WTC11 (cell line): ENCODE measurements at regions of chr3 and their contacts with region 1.

Region 1: DNA sequence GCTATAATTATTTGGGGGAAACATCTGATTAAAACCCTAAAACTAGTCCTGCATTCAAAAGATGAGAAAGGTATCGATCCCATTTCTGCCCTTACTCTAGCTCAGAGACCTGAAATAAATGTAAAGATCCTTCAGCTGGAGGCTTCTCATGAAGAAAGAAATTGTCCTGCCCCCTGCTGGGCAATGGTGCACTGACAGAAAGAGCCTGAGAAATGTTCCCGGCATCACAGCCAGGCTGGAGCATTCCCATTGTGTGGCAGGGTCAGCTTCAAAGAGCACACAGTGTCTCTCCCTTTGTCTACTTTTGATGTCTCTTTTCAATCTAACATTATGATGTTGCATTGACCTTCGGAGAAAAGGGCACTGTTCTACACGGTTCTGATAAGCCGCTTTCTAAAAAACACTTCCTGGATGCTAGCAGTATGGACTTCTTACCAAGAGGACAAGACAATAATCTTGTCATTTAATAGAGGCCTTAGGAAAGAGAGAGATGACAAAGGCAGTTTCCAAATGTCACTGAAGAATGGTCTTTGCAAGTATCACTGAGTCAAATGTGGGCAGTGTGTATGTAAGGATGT is 287.5 kb downstream of the MAGI1 start:
- DNase-seq: peak; percentile 77
- ATAC-seq: peak; percentile 80
- H3K4me3 Mint-ChIP-seq: no peak overlapping the region
- H3K27ac Mint-ChIP-seq: peak overlapping the region; percentile 51; the same call in 1 of the 2 replicates
- H3K4me1 Mint-ChIP-seq: peaks cover 41% of the 10 kb centered on the region
- H3K27me3 Mint-ChIP-seq: no peaks in the 10 kb centered on the region
- CTCF ChIP-seq: peak; percentile 62

Region 2: GRCh38 chr3:65439641-65440284 is 311.4 kb before region 1 on chr3:
- CTCF ChIA-PET with region 1: interaction called, 23 read pairs
- POLR2A ChIA-PET with region 1: no interaction called
- DNase-seq: peak; percentile 62
- ATAC-seq: peak; percentile 97
- H3K4me3 Mint-ChIP-seq: no peak overlapping the region
- H3K27ac Mint-ChIP-seq: peak overlapping the region; percentile 68
- H3K4me1 Mint-ChIP-seq: peaks cover 20% of the 10 kb centered on the region
- H3K27me3 Mint-ChIP-seq: no peaks in the 10 kb centered on the region
- CTCF ChIP-seq: peak; percentile 27; the same call in 1 of the 2 replicates

Region 3: DNA sequence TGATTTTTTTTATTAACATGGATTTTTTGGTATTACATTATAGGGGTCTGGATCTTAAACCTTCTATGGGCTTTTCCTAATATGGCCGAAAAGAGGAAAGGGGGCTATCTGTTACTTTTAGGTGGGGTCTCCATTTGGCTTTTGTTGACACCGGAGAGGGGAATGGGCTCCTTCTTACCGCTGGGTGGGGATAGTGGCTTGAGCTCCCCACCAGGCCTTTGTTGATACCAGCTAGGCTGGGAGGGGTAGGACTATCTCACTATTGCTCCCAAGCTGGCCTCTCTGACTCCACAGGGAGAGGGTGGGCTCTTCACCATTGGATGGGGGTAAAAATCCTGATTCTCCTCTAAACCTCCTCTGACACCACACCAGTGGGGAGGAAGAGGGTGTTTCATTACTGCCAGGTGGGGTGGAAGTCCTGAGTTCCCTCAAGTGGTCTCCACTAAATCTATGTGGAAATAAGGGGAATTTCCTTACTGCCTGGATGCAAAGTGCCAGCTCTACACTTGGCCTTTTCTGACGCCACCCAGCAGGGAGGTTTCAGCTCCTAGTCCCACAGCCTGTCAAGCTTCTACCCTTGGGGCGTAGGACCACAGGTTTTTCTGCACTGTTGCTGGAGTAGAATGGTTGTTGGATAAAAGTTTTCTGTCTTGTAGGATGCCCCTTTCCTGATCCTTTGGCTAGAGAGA is 284.8 kb before region 1 on chr3:
- CTCF ChIA-PET with region 1: interaction called, 14 read pairs
- POLR2A ChIA-PET with region 1: no interaction called
- DNase-seq: peak; percentile 45
- ATAC-seq: peak; percentile 100
- H3K4me3 Mint-ChIP-seq: no peak overlapping the region
- H3K27ac Mint-ChIP-seq: no peak overlapping the region
- H3K4me1 Mint-ChIP-seq: peaks cover 23% of the 10 kb centered on the region
- H3K27me3 Mint-ChIP-seq: no peaks in the 10 kb centered on the region
- CTCF ChIP-seq: no peak

Region 4: GRCh38 chr3:65561617-65562016 is 189.6 kb before region 1 on chr3:
- CTCF ChIA-PET with region 1: interaction called, 10 read pairs
- POLR2A ChIA-PET with region 1: no interaction called
- DNase-seq: no peak
- ATAC-seq: no peak
- H3K4me3 Mint-ChIP-seq: no peak overlapping the region
- H3K27ac Mint-ChIP-seq: 0 out of 2 replicates have a peak overlapping the region, but pooled peaks have one; percentile 44
- H3K4me1 Mint-ChIP-seq: peaks cover 56% of the 10 kb centered on the region
- H3K27me3 Mint-ChIP-seq: no peaks in the 10 kb centered on the region
- CTCF ChIP-seq: no peak

Region 5: GRCh38 chr3:65672871-65673815 is 78.1 kb before region 1 on chr3:
- CTCF ChIA-PET with region 1: interaction called, 10 read pairs
- POLR2A ChIA-PET with region 1: no interaction called
- DNase-seq: peak; percentile 74
- ATAC-seq: peak; percentile 66
- H3K4me3 Mint-ChIP-seq: no peak overlapping the region
- H3K27ac Mint-ChIP-seq: no peak overlapping the region
- H3K4me1 Mint-ChIP-seq: peaks cover 36% of the 10 kb centered on the region
- H3K27me3 Mint-ChIP-seq: no peaks in the 10 kb centered on the region
- CTCF ChIP-seq: peak; percentile 85

Region 6: GRCh38 chr3:65732051-65732935 is 18.9 kb before region 1 on chr3:
- CTCF ChIA-PET with region 1: interaction called, 12 read pairs
- POLR2A ChIA-PET with region 1: no interaction called
- DNase-seq: no peak
- ATAC-seq: peak; percentile 86
- H3K4me3 Mint-ChIP-seq: no peak overlapping the region
- H3K27ac Mint-ChIP-seq: peak overlapping the region; percentile 51; the same call in 1 of the 2 replicates
- H3K4me1 Mint-ChIP-seq: peaks cover 54% of the 10 kb centered on the region
- H3K27me3 Mint-ChIP-seq: no peaks in the 10 kb centered on the region
- CTCF ChIP-seq: peak; percentile 40; the same call in 1 of the 2 replicates

Region 7: GRCh38 chr3:65761446-65762234 is 10.4 kb after region 1 on chr3:
- CTCF ChIA-PET with region 1: interaction called, 12 read pairs
- POLR2A ChIA-PET with region 1: no interaction called
- DNase-seq: no peak
- ATAC-seq: peak; percentile 73
- H3K4me3 Mint-ChIP-seq: peak overlapping the region; percentile 10; the same call in 1 of the 2 replicates
- H3K27ac Mint-ChIP-seq: peak overlapping the region; percentile 58; the same call in 1 of the 2 replicates
- H3K4me1 Mint-ChIP-seq: peaks cover 49% of the 10 kb centered on the region
- H3K27me3 Mint-ChIP-seq: no peaks in the 10 kb centered on the region
- CTCF ChIP-seq: no peak

Region 8: GRCh38 chr3:65811086-65811761 is 60.0 kb after region 1 on chr3:
- CTCF ChIA-PET with region 1: no interaction called
- POLR2A ChIA-PET with region 1: no interaction called
- DNase-seq: no peak
- ATAC-seq: no peak
- H3K4me3 Mint-ChIP-seq: no peak overlapping the region
- H3K27ac Mint-ChIP-seq: 0 out of 2 replicates have a peak overlapping the region, but pooled peaks have one; percentile 64
- H3K4me1 Mint-ChIP-seq: peaks cover 40% of the 10 kb centered on the region
- H3K27me3 Mint-ChIP-seq: no peaks in the 10 kb centered on the region
- CTCF ChIP-seq: no peak